Ovary (tissue), 10 donors: ENCODE measurements at regions of chr5 and their contacts with region 1.

Region 1: GRCh38 chr5:90119531-90120006 is 290.0 kb downstream of the CETN3 start:
- DNase-seq: no peak
- H3K4me3 ChIP-seq: no peak overlapping the region
- H3K27ac ChIP-seq: no peak overlapping the region
- H3K4me1 ChIP-seq: no peaks in the 10 kb centered on the region
- H3K27me3 ChIP-seq: no peaks in the 10 kb centered on the region
- CTCF ChIP-seq: no peak
- EP300 ChIP-seq: no peak
- POLR2A ChIP-seq: no peak

Region 2: DNA sequence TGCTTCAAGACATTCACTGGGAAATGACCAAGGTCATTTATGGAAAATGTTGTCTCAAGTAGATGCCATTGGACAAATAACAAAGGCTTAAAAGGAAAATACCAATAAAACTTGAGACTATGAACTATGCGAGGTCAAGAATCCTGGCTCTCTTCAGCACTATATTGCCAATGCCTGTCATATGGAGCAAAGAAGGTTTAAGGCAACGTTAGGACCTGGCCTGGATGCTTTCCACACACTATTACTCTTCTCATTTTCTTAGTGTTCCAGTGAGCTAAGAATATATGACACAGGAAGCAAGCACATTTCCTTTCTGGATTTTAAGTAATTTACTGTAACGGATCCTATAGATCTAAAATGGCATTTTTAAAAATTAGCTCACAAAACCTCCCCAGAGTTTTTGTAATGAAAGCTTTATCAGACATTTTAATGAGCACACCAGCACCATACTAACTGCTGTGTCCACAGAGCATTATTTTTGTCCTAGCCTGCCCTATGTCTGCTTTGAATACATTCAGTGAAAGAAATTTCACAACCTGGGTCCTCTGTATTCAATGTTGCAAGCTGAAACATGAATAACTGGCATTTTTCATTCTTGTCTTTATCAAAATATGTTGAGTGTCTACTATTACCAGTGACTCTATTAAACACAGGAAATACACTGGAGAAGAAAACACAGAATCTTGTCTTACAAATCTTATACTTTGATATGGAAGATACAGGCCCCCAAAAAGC is 25.7 kb before region 1 on chr5:
- intact Hi-C with region 1: loop called in 1 of 4 experiments (anchors 2 kb)
- DNase-seq: no peak
- H3K4me3 ChIP-seq: no peak overlapping the region
- H3K27ac ChIP-seq: no peak overlapping the region
- H3K4me1 ChIP-seq: no peaks in the 10 kb centered on the region
- H3K27me3 ChIP-seq: no peaks in the 10 kb centered on the region
- CTCF ChIP-seq: no peak
- EP300 ChIP-seq: no peak
- POLR2A ChIP-seq: no peak